AG04449 (cell line): ENCODE measurements at regions of chr12 and their contacts with region 1.

Region 1: DNA sequence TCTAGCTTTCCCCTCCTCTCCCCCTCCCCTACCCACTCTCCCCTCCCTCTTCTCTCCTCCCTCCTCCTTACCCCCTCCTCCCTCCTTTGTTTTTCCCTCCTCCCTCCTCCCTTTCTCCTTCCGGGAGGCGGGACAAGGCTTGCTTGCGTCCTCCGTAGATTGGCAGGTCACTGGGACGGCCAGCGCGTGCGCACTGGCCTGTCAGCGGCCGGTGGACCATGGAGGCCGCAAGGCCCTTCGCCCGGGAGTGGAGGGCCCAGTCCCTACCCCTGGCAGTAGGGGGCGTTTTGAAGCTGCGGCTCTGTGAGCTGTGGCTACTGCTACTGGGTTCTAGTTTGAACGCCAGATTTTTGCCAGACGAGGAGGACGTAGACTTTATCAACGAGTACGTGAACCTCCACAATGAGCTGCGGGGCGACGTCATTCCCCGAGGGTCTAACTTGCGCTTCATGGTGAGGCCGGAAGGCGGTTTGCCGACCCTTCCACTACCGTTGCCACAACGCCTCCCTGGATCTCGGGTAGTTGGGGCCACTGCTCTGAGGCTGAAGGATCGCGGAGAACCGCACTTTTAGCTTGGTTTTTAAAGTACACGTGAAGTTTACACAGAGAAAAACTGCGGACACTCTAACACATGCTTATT is at the start of gene GLIPR1L2:
- DNase-seq: peak; percentile 84
- H3K4me3 ChIP-seq: peak within 1 kb of the TSS; percentile 66
- CTCF ChIP-seq: peak; percentile 92

Region 2: DNA sequence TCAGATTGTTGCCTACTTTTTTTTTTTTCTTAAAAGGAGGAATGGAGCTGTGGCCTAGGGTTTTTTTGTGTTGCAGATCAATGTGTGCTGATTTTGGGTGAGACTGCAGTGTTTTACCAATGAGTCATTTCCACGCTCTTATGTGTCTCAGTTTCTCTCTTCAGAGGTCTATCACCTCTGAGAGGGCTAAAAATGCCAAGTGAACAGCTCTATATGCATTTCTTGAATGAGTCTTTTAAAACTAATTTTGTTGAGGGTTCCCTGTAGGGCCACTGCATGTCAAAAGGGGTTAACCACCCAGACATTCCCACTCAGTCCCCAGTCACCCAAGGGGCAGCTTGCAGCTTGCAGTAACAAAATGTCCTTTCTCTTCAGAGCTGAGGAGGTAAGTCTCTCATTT is 24.4 kb before region 1 on chr12:
- CTCF ChIA-PET with region 1: interaction called, 15 read pairs
- POLR2A ChIA-PET with region 1: no interaction called
- DNase-seq: no peak
- H3K4me3 ChIP-seq: no peak overlapping the region
- CTCF ChIP-seq: no peak

Region 3: DNA sequence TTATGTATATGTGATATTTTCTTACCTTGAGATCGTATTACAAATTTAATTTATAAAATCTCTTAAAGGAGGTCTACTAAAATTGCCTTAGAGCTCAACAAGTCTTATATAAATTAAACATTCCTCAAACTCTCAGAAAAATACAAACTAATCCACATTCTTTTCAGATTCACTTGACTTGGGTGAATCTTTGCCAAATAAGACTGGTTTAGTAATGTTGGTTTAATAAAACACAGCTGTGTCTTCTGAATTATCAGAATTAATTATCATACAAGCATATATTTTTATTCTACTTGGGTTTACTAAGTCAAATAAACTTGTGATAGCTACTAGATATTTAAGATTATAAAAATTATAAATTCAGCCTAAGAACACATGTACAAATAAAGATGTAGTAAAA is 13.2 kb after region 1 on chr12:
- CTCF ChIA-PET with region 1: interaction called, 21 read pairs
- POLR2A ChIA-PET with region 1: no interaction called
- DNase-seq: no peak
- H3K4me3 ChIP-seq: no peak overlapping the region
- CTCF ChIP-seq: no peak

Region 4: DNA sequence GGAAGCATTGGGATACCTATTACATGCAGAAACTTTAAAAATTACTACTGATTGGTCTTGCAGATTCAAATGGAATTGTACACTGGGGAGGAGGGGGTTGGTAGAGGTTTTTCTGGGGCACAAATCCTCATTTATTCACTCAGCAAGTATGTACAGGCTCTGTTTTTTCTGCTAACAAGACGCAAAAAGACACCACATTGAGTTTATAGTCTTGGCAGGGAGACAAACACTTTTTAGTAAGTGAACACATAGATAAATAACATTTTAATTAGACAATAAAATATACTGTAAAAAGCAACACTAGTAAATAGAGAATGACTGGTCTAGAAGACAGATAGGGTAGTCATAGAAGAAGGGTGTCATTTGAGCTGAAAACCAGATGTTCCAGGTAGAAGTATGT is 23.7 kb after region 1 on chr12:
- CTCF ChIA-PET with region 1: interaction called, 12 read pairs
- POLR2A ChIA-PET with region 1: no interaction called
- DNase-seq: no peak
- H3K4me3 ChIP-seq: no peak overlapping the region
- CTCF ChIP-seq: no peak

Region 5: GRCh38 chr12:75480469-75480949 is 89.5 kb after region 1 on chr12 and contains the start of gene GLIPR1:
- CTCF ChIA-PET with region 1: interaction called, 86 read pairs
- POLR2A ChIA-PET with region 1: interaction called, 11 read pairs
- DNase-seq: peak; percentile 98
- H3K4me3 ChIP-seq: peak within 1 kb of the TSS; percentile 56
- CTCF ChIP-seq: no peak

Region 6: DNA sequence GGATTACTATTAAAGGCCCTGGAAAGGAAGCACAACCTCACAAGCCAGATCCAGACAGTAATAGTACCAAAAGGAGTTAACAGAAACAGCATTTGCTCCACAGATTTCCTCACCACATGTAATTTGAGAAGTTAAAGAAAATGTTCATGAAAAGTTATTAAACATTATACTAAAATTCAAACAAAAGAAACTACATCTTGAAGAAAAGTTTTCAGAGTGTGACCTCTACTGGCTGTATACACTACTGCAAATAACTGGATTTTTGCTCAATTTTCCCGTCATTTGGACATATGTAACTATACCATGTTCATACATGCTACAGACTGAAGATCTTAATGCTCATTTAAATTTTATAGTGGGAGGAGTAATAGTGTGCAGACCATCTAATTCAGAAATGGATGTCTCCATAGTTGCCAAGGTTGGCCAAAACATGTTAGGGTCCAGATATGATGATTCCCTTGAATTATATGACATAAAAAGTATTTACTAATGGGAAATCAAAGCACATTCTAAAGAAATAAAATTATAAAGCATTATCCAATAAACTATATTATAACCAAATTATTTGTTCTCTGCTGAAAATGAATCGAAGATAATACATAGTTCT is 114.8 kb after region 1 on chr12:
- CTCF ChIA-PET with region 1: interaction called, 12 read pairs
- POLR2A ChIA-PET with region 1: no interaction called
- DNase-seq: no peak
- H3K4me3 ChIP-seq: no peak overlapping the region
- CTCF ChIP-seq: peak; percentile 41